Activated CD8-positive, alpha-beta T cell treated with anti-CD3 and anti-CD28 coated beads, Interleukin-2, amount 10 ng/mL, durations not matched to agents 7 days and 5 days (primary cell): ENCODE measurements at regions of chr6 and their contacts with region 1.

Region 1: GRCh38 chr6:132279592-132280139 is 121.6 kb downstream of the MOXD1 start:
- DNase-seq: peak; percentile 80
- ATAC-seq: peak; percentile 84
- H3K4me3 Mint-ChIP-seq: peak overlapping the region; percentile 68
- H3K27ac Mint-ChIP-seq: no peak overlapping the region
- H3K4me1 Mint-ChIP-seq: no peaks in the 10 kb centered on the region
- H3K27me3 Mint-ChIP-seq: peaks cover 9% of the 10 kb centered on the region

Region 2: GRCh38 chr6:131923356-131923755 is 356.3 kb before region 1 on chr6:
- CTCF ChIA-PET with region 1: interaction called, 16 read pairs
- POLR2A ChIA-PET with region 1: no interaction called
- DNase-seq: peak; percentile 68
- ATAC-seq: peak; percentile 60
- H3K4me3 Mint-ChIP-seq: no peak overlapping the region
- H3K27ac Mint-ChIP-seq: no peak overlapping the region
- H3K4me1 Mint-ChIP-seq: no peaks in the 10 kb centered on the region
- H3K27me3 Mint-ChIP-seq: peaks cover 11% of the 10 kb centered on the region

Region 3: GRCh38 chr6:132289756-132290155 is 10.1 kb after region 1 on chr6:
- CTCF ChIA-PET with region 1: interaction called, 76 read pairs
- POLR2A ChIA-PET with region 1: no interaction called
- DNase-seq: no peak
- ATAC-seq: no peak
- H3K4me3 Mint-ChIP-seq: no peak overlapping the region
- H3K27ac Mint-ChIP-seq: no peak overlapping the region
- H3K4me1 Mint-ChIP-seq: no peaks in the 10 kb centered on the region
- H3K27me3 Mint-ChIP-seq: peaks cover 16% of the 10 kb centered on the region

Region 4: GRCh38 chr6:132456700-132457143 is 177.1 kb after region 1 on chr6:
- CTCF ChIA-PET with region 1: interaction called, 23 read pairs
- POLR2A ChIA-PET with region 1: no interaction called
- DNase-seq: no peak
- ATAC-seq: no peak
- H3K4me3 Mint-ChIP-seq: no peak overlapping the region
- H3K27ac Mint-ChIP-seq: no peak overlapping the region
- H3K4me1 Mint-ChIP-seq: peaks cover 5% of the 10 kb centered on the region
- H3K27me3 Mint-ChIP-seq: no peaks in the 10 kb centered on the region

Region 5: GRCh38 chr6:132483779-132484679 is 204.4 kb after region 1 on chr6:
- CTCF ChIA-PET with region 1: interaction called, 195 read pairs
- POLR2A ChIA-PET with region 1: no interaction called
- DNase-seq: peak; percentile 69
- ATAC-seq: peak; percentile 73
- H3K4me3 Mint-ChIP-seq: no peak overlapping the region
- H3K27ac Mint-ChIP-seq: no peak overlapping the region
- H3K4me1 Mint-ChIP-seq: peaks cover 3% of the 10 kb centered on the region
- H3K27me3 Mint-ChIP-seq: no peaks in the 10 kb centered on the region

Region 6: GRCh38 chr6:132537145-132537544 is 257.5 kb after region 1 on chr6:
- CTCF ChIA-PET with region 1: interaction called, 11 read pairs
- POLR2A ChIA-PET with region 1: no interaction called
- DNase-seq: no peak
- ATAC-seq: no peak
- H3K4me3 Mint-ChIP-seq: no peak overlapping the region
- H3K27ac Mint-ChIP-seq: no peak overlapping the region
- H3K4me1 Mint-ChIP-seq: no peaks in the 10 kb centered on the region
- H3K27me3 Mint-ChIP-seq: peaks cover 26% of the 10 kb centered on the region